ENCODE measurements at regions of chr5 and their contacts with region 1.

Region 1: GRCh38 chr5:99060306-99061261 is 131.8 kb upstream of the CHD1 start:
- DNase-seq: peak; percentile 88
- H3K4me3 Mint-ChIP-seq: no peak overlapping the region
- H3K27ac Mint-ChIP-seq: no peak overlapping the region
- H3K4me1 Mint-ChIP-seq: peaks cover 6% of the 10 kb centered on the region
- H3K27me3 Mint-ChIP-seq: peaks cover 1% of the 10 kb centered on the region

Region 2: GRCh38 chr5:97183100-97183929 is 1877.3 kb before region 1 on chr5 and contains the start of gene RIOK2:
- CTCF ChIA-PET with region 1: no interaction called
- POLR2A ChIA-PET with region 1: no interaction called
- intact Hi-C with region 1: loop called (anchors 10 kb)
- DNase-seq: peak; percentile 96
- H3K4me3 Mint-ChIP-seq: peak within 1 kb of the TSS; percentile 87
- H3K27ac Mint-ChIP-seq: peak within 1 kb of the TSS; percentile 98
- H3K4me1 Mint-ChIP-seq: peaks cover 34% of the 10 kb centered on the region
- H3K27me3 Mint-ChIP-seq: no peaks in the 10 kb centered on the region
- total RNA-seq, gene RIOK2: 31.8 to 41.5 TPM

Region 3: GRCh38 chr5:98296426-98296825 is 764.2 kb before region 1 on chr5:
- CTCF ChIA-PET with region 1: no interaction called
- POLR2A ChIA-PET with region 1: no interaction called
- intact Hi-C with region 1: no loop called
- DNase-seq: no peak
- H3K4me3 Mint-ChIP-seq: no peak overlapping the region
- H3K27ac Mint-ChIP-seq: no peak overlapping the region
- H3K4me1 Mint-ChIP-seq: no peaks in the 10 kb centered on the region
- H3K27me3 Mint-ChIP-seq: peaks cover 7% of the 10 kb centered on the region

Region 4: GRCh38 chr5:98391921-98392625 is 668.5 kb before region 1 on chr5:
- CTCF ChIA-PET with region 1: no interaction called
- POLR2A ChIA-PET with region 1: no interaction called
- intact Hi-C with region 1: no loop called
- DNase-seq: no peak
- H3K4me3 Mint-ChIP-seq: no peak overlapping the region
- H3K27ac Mint-ChIP-seq: no peak overlapping the region
- H3K4me1 Mint-ChIP-seq: no peaks in the 10 kb centered on the region
- H3K27me3 Mint-ChIP-seq: no peaks in the 10 kb centered on the region

Region 5: DNA sequence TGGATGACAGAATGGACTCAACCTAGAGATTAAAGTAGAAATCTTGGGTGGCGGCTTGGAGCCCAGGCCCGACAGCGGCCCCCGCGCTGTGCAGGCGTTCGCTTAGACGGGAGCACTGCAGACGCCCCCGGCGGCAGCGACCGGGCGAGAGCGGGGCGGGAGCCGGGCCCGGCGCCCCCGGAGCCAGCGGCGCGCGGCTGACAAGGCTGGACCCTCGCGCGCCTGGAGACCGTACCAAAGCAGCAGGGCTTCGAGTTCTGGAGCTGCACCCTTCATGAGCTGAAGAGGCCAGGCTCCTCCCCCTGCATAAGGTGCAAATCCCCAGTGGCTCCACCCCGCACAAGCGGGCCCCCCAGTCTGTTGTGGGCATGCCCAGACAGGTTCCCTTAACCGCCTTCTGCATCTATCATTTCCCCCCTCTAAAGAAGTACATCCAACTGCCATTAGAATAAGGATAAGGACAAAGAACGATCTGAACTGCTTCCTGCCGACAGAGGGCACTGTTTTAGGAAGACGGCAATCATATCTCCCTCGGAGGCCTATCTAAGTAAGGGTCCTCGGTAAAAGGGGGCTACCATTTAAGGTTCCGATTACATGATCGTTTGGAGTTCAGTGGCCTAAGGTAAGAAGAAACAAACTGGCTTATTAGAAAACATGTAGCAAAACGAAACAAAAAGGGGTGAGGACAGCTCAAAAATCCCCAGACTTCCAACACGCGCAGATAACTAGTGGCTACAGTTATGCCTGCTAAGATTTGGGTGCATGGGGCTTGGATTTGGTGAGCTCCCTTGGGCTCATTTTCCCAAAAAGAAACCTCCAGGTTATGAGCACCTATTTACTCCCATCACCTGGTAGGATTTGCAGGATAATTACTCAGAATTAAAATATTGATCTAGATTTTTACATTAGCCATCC is 220.9 kb before region 1 on chr5:
- CTCF ChIA-PET with region 1: interaction called, 19 read pairs
- POLR2A ChIA-PET with region 1: no interaction called
- intact Hi-C with region 1: loop called (anchors 1 kb)
- DNase-seq: peak; percentile 17
- H3K4me3 Mint-ChIP-seq: peak overlapping the region; percentile 1
- H3K27ac Mint-ChIP-seq: no peak overlapping the region
- H3K4me1 Mint-ChIP-seq: no peaks in the 10 kb centered on the region
- H3K27me3 Mint-ChIP-seq: no peaks in the 10 kb centered on the region

Region 6: GRCh38 chr5:98905857-98906690 is 154.5 kb before region 1 on chr5:
- CTCF ChIA-PET with region 1: interaction called, 43 read pairs
- POLR2A ChIA-PET with region 1: interaction called, 3 read pairs
- intact Hi-C with region 1: loop called (anchors 1 kb)
- DNase-seq: no peak
- H3K4me3 Mint-ChIP-seq: no peak overlapping the region
- H3K27ac Mint-ChIP-seq: no peak overlapping the region
- H3K4me1 Mint-ChIP-seq: peaks cover 58% of the 10 kb centered on the region
- H3K27me3 Mint-ChIP-seq: no peaks in the 10 kb centered on the region

Region 7: GRCh38 chr5:98917433-98917832 is 143.2 kb before region 1 on chr5:
- CTCF ChIA-PET with region 1: interaction called, 20 read pairs
- POLR2A ChIA-PET with region 1: interaction called, 3 read pairs
- intact Hi-C with region 1: no loop called
- DNase-seq: no peak
- H3K4me3 Mint-ChIP-seq: no peak overlapping the region
- H3K27ac Mint-ChIP-seq: no peak overlapping the region
- H3K4me1 Mint-ChIP-seq: peaks cover 72% of the 10 kb centered on the region
- H3K27me3 Mint-ChIP-seq: no peaks in the 10 kb centered on the region

Region 8: GRCh38 chr5:98940581-98940980 is 120.0 kb before region 1 on chr5:
- CTCF ChIA-PET with region 1: interaction called, 15 read pairs
- POLR2A ChIA-PET with region 1: no interaction called
- intact Hi-C with region 1: no loop called
- DNase-seq: no peak
- H3K4me3 Mint-ChIP-seq: no peak overlapping the region
- H3K27ac Mint-ChIP-seq: peak overlapping the region; percentile 20
- H3K4me1 Mint-ChIP-seq: peaks cover 51% of the 10 kb centered on the region
- H3K27me3 Mint-ChIP-seq: no peaks in the 10 kb centered on the region

Region 9: GRCh38 chr5:99070822-99071221 is 10.2 kb after region 1 on chr5:
- CTCF ChIA-PET with region 1: interaction called, 17 read pairs
- POLR2A ChIA-PET with region 1: no interaction called
- intact Hi-C with region 1: no loop called
- DNase-seq: no peak
- H3K4me3 Mint-ChIP-seq: no peak overlapping the region
- H3K27ac Mint-ChIP-seq: no peak overlapping the region
- H3K4me1 Mint-ChIP-seq: no peaks in the 10 kb centered on the region
- H3K27me3 Mint-ChIP-seq: no peaks in the 10 kb centered on the region

Region 10: GRCh38 chr5:99305045-99305580 is 244.5 kb after region 1 on chr5:
- CTCF ChIA-PET with region 1: no interaction called
- POLR2A ChIA-PET with region 1: no interaction called
- intact Hi-C with region 1: no loop called
- DNase-seq: no peak
- H3K4me3 Mint-ChIP-seq: no peak overlapping the region
- H3K27ac Mint-ChIP-seq: no peak overlapping the region
- H3K4me1 Mint-ChIP-seq: no peaks in the 10 kb centered on the region
- H3K27me3 Mint-ChIP-seq: no peaks in the 10 kb centered on the region

Measured in activated CD4-positive, alpha-beta memory T cell treated with anti-CD3 and anti-CD28 coated beads for 36 hours (primary cell).